A673 (cell line): ENCODE measurements at regions of chr5 and their contacts with region 1.

Region 1: GRCh38 chr5:66864331-66864840 is 268.2 kb downstream of the MAST4 start:
- DNase-seq: peak; percentile 51
- H3K4me3 ChIP-seq: no peak overlapping the region
- H3K27ac ChIP-seq: no peak overlapping the region
- H3K4me1 ChIP-seq: no peaks in the 10 kb centered on the region
- H3K27me3 ChIP-seq: no peaks in the 10 kb centered on the region
- CTCF ChIP-seq: peak; percentile 67

Region 2: GRCh38 chr5:65801352-65801783 is 1063.0 kb before region 1 on chr5:
- CTCF ChIA-PET with region 1: no interaction called
- POLR2A ChIA-PET with region 1: no interaction called
- intact Hi-C with region 1: no loop called
- DNase-seq: no peak
- H3K4me3 ChIP-seq: no peak overlapping the region
- H3K27ac ChIP-seq: no peak overlapping the region
- H3K4me1 ChIP-seq: no peaks in the 10 kb centered on the region
- H3K27me3 ChIP-seq: no peaks in the 10 kb centered on the region
- CTCF ChIP-seq: no peak

Region 3: DNA sequence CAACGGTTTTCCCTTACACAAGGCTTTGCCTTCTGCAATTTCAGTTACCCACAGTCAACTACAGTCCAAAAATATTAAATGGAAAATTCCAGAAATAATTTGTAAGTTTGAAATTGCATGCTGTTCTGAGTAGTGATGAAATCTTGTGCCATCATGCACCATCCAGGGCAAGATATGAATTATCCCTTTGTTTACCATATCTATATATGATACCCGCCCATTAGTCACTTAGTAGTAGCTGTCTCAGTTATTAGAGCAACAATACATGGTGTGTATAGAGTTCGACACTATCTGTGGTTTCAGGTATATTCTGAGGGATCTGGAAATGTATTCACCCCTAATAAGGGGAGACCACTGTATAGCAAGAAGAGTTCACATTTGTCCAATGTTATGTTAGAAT is 908.6 kb before region 1 on chr5:
- CTCF ChIA-PET with region 1: no interaction called
- POLR2A ChIA-PET with region 1: no interaction called
- intact Hi-C with region 1: no loop called
- DNase-seq: no peak
- H3K4me3 ChIP-seq: no peak overlapping the region
- H3K27ac ChIP-seq: no peak overlapping the region
- H3K4me1 ChIP-seq: no peaks in the 10 kb centered on the region
- H3K27me3 ChIP-seq: no peaks in the 10 kb centered on the region
- CTCF ChIP-seq: no peak

Region 4: DNA sequence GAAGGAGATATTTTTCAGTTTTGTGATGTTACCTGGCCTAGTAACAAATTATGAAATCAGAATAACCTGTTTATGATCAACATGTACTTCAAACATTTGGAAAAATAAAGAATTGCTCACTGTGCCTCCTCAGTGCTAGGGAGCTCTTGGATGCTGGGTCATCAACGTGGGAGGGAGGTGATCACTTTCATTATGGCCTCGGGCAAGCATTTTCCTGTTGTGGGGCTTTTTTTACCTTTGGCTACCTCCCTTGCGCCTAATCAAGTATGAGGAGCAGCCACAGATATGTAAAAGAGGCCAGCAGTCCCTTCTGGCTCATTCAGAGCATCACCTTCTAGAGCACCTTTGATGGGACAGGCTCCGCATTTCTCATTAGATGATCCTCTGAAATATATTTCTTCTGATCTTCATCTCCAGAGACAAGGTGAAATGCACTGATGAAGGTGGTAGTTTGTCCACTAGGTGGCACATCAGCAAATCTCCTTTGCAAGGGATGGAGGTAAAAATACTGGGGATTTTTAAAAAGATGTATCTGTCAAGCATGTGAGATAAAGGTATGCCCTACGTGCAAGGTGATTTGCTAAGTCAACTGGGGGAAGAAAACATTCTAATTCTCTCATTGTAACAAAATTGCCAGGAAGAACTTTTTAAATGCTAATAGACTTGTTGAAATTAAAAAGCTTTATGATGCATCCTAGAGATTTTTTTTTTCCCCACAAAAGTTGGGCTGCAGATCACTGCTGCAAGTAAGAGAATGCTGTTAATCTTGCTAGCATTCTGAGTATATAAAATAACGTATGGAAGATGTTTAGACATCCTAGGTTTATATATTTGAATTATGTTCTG is 50.0 kb before region 1 on chr5:
- CTCF ChIA-PET with region 1: interaction called, 3 read pairs
- POLR2A ChIA-PET with region 1: no interaction called
- intact Hi-C with region 1: loop called (anchors 2 kb)
- DNase-seq: peak; percentile 40
- H3K4me3 ChIP-seq: no peak overlapping the region
- H3K27ac ChIP-seq: no peak overlapping the region
- H3K4me1 ChIP-seq: no peaks in the 10 kb centered on the region
- H3K27me3 ChIP-seq: no peaks in the 10 kb centered on the region
- CTCF ChIP-seq: peak; percentile 72